Panc1 (cell line): ENCODE measurements at regions of chr5 and their contacts with region 1.

Region 1: DNA sequence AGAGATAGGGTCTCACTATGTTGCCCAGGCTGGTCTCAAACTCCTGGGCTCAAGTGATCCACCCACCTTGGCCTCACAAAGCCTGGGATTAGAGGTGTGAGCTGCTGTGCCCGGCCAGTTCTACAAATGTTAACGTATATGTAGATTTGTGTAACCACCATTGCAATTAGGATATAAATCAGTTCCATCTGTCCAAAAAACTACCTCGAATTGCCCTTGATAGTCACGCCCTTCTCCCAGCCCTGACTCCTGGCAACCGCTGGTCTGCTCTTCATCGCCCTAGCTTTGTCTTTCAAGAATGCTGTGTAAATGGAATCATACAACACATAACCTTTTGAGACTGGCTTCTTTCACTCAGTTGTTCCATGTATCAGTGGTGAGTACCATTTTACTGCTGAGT is 46.1 kb upstream of the PPARGC1B start:
- DNase-seq: no peak
- ATAC-seq: no peak
- H3K4me3 ChIP-seq: no peak overlapping the region
- H3K27ac ChIP-seq: no peak overlapping the region
- H3K4me1 ChIP-seq: no peaks in the 10 kb centered on the region
- H3K27me3 ChIP-seq: peaks cover 26% of the 10 kb centered on the region
- CTCF ChIP-seq: no peak

Region 2: GRCh38 chr5:149466457-149466972 is 217.4 kb before region 1 on chr5:
- CTCF ChIA-PET with region 1: interaction called, 11 read pairs
- POLR2A ChIA-PET with region 1: no interaction called
- in situ Hi-C with region 1: no loop called
- intact Hi-C with region 1: no loop called
- DNase-seq: no peak
- ATAC-seq: peak; percentile 76
- H3K4me3 ChIP-seq: no peak overlapping the region
- H3K27ac ChIP-seq: no peak overlapping the region
- H3K4me1 ChIP-seq: peaks cover 23% of the 10 kb centered on the region
- H3K27me3 ChIP-seq: no peaks in the 10 kb centered on the region
- CTCF ChIP-seq: no peak